Heart right ventricle (tissue), 16 donors: ENCODE measurements at regions of chr15 and their contacts with region 1.

Region 1: DNA sequence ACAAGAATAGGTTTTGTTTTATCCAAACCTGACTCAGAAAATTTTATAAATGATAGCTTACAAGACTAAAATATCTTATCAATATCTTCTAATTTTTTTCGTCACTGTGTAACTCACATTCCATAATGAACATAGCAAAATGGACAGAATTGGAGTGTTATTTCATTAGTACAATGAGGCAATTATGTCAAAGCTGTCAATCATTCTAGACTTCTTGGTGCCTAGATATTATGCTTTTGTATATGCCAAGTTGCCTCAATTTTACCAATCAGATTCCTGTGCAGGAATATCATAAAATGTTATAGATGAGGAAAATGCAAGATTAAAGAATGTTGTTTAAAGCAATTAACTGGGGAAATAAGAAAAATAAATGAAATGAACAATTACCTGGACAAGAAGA is 175.8 kb upstream of the ST8SIA2 start:
- DNase-seq: no peak
- ATAC-seq: no peak
- H3K4me3 ChIP-seq: no peak overlapping the region
- H3K27ac ChIP-seq: no peak overlapping the region
- H3K4me1 ChIP-seq: no peaks in the 10 kb centered on the region
- H3K27me3 ChIP-seq: no peaks in the 10 kb centered on the region
- CTCF ChIP-seq: no peak

Region 2: GRCh38 chr15:92069308-92070250 is 148.3 kb before region 1 on chr15:
- intact Hi-C with region 1: no loop called
- DNase-seq: peak in 1 of 2 donors; percentile 68
- ATAC-seq: peak; percentile 65 to 92 (median 82)
- H3K4me3 ChIP-seq: peak overlapping the region in 8 of 10 donors; percentile 9 to 39 (median 30)
- H3K27ac ChIP-seq: peak overlapping the region in 9 of 10 donors; percentile 29 to 81 (median 72)
- H3K4me1 ChIP-seq: peaks cover 8 to 70% (median 66%) of the 10 kb centered on the region in 9 donors
- H3K27me3 ChIP-seq: no peaks in the 10 kb centered on the region
- CTCF ChIP-seq: no peak

Region 3: DNA sequence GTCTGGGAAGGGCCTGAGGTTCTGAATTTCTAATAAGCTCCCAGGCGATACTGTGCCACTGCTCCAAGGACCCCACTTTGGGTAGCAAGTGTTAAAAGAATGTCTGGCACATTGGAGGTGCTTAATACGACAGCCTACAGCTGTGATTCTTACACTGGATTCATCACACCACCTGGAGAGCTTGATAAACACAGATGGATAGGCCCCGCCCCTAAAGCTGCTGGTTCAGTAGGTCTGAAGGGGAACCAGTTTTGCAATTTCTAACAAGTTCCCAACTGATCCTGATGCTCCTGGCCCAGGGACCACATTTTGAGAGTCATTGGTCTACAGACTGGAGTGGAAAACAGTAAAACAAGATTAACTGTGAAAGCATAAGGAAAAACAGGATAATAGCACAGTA is 51.0 kb after region 1 on chr15:
- intact Hi-C with region 1: loop called in 2 of 10 experiments (anchors 5 to 10 kb)
- DNase-seq: no peak
- ATAC-seq: no peak
- H3K4me3 ChIP-seq: no peak overlapping the region
- H3K27ac ChIP-seq: no peak overlapping the region
- H3K4me1 ChIP-seq: peaks cover 0 to 4% (median 0%) of the 10 kb centered on the region in 9 donors
- H3K27me3 ChIP-seq: peaks cover 0 to 10% (median 0%) of the 10 kb centered on the region in 7 donors
- CTCF ChIP-seq: no peak